ENCODE measurements at regions of chr1 and their contacts with region 1.

Region 1: GRCh38 chr1:20194757-20195461 is 8.6 kb upstream of the PLA2G2C start:
- DNase-seq: no peak
- H3K4me3 ChIP-seq: no peak overlapping the region
- H3K27me3 ChIP-seq: peaks cover 11% of the 10 kb centered on the region
- CTCF ChIP-seq: peak; percentile 92

Region 2: GRCh38 chr1:19918057-19918456 is 276.9 kb before region 1 on chr1:
- CTCF ChIA-PET with region 1: interaction called, 34 read pairs
- POLR2A ChIA-PET with region 1: no interaction called
- DNase-seq: no peak
- H3K4me3 ChIP-seq: no peak overlapping the region
- H3K27me3 ChIP-seq: no peaks in the 10 kb centered on the region
- CTCF ChIP-seq: peak; percentile 88

Region 3: DNA sequence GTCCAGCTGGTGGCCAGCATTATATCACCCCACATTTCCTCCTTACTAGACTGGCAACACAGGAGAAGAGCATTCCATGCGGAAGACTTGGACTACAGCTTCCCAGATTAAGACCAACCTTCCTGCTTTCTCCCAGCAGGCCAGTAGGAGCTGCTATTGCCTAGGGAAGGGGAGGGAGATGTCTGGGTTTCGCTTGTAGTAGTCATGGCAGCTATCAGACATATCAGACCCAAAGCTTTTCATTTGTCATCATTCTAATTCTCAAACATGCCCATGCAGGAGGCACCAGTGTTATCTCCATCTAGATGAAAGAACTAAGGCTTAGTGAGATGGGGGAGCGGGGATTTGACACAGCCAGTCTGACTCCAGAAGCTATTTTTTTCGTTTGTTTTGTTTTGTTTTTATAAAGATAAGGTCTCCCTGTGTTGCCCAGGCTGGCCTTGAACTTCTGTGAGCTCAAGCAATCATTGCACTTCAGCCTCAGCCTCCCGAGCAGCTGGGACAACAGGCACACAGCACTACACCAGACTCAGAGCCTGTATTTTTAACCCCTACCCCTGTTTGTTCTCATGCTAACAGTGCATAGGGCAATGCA is 220.0 kb before region 1 on chr1:
- CTCF ChIA-PET with region 1: interaction called, 77 read pairs
- POLR2A ChIA-PET with region 1: no interaction called
- DNase-seq: peak; percentile 8
- H3K4me3 ChIP-seq: no peak overlapping the region
- H3K27me3 ChIP-seq: no peaks in the 10 kb centered on the region; the same call in 1 of the 2 replicates
- CTCF ChIP-seq: peak; percentile 90

Region 4: GRCh38 chr1:20008391-20008841 is 186.5 kb before region 1 on chr1:
- CTCF ChIA-PET with region 1: no interaction called
- POLR2A ChIA-PET with region 1: no interaction called
- DNase-seq: no peak
- H3K4me3 ChIP-seq: no peak overlapping the region
- H3K27me3 ChIP-seq: no peaks in the 10 kb centered on the region; the same call in 1 of the 2 replicates
- CTCF ChIP-seq: no peak

Region 5: GRCh38 chr1:20207419-20207959 is 12.6 kb after region 1 on chr1:
- CTCF ChIA-PET with region 1: interaction called, 23 read pairs
- POLR2A ChIA-PET with region 1: no interaction called
- DNase-seq: no peak
- H3K4me3 ChIP-seq: no peak overlapping the region
- H3K27me3 ChIP-seq: peaks cover 2% of the 10 kb centered on the region
- CTCF ChIP-seq: no peak

Region 6: DNA sequence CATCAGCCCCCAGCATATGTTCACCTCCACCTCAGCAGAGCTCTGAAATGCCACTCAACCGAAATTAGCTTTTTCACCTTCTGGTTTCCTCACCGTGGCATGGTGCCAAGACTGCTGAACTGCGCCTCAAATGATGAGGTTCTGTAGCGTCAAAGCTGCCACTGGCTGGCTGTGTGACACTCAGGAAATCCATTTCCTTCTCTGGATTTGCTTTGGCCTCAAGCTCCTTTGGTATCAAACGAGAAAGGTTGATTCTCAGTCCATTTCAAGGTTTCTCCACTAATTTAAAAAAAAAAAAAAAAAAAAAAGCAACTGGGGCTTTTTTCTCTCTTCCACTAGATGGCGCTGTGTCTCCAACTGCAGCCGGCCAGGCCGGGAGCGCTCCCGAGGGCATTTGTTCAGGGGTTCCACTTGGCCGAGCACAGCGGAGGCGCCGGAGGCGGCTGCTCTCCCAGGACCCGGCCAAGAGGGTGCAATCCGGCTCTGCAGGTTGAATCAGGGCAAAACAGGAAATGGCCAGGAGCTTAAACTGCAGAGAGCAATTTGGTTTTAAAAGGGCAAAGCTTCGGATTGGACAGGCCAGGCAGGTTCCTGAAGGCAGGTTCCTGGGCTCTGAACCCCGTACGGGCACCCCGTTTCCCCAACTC is 17.9 kb after region 1 on chr1:
- CTCF ChIA-PET with region 1: interaction called, 23 read pairs
- POLR2A ChIA-PET with region 1: no interaction called
- DNase-seq: no peak
- H3K4me3 ChIP-seq: no peak overlapping the region
- H3K27me3 ChIP-seq: peaks cover 5% of the 10 kb centered on the region
- CTCF ChIP-seq: peak; percentile 84